Common myeloid progenitor, CD34-positive (primary cell): ENCODE measurements at regions of chr11 and their contacts with region 1.

Region 1: DNA sequence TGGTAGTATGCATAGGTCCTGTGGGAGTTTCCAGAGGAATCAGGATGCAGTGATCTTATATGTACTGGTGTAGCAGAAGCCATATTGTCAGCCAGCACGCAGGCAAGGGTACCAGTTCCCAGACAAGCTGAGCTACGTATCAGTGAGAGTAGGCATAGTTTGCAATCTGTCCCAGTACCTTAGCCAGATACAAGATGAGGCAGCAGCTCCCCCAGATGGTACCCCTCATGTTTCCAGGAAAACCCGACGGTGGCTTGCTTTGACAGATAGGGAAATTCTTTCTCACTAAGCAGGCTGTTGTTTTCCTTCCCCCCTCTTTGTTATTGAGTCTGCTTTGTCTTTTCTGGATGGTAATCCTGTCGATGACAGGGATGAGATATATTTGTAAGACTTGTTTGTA is 109.7 kb upstream of the RRM1 start:
- DNase-seq: peak; percentile 76 to 82 (median 78)
- H3K4me3 ChIP-seq: peak overlapping the region in 1 of 7 experiments; percentile 6
- H3K27ac ChIP-seq: no peak overlapping the region
- H3K4me1 ChIP-seq: peaks cover 0 to 31% (median 24%) of the 10 kb centered on the region in 4 experiments
- H3K27me3 ChIP-seq: no peaks in the 10 kb centered on the region

Region 2: GRCh38 chr11:3929649-3930048 is 55.2 kb before region 1 on chr11:
- CTCF ChIA-PET with region 1: interaction called, 16 read pairs
- POLR2A ChIA-PET with region 1: no interaction called
- DNase-seq: no peak
- H3K4me3 ChIP-seq: no peak overlapping the region
- H3K27ac ChIP-seq: no peak overlapping the region
- H3K4me1 ChIP-seq: peaks cover 6 to 22% (median 10%) of the 10 kb centered on the region in 4 experiments
- H3K27me3 ChIP-seq: no peaks in the 10 kb centered on the region

Region 3: GRCh38 chr11:3939211-3939610 is 45.7 kb before region 1 on chr11:
- CTCF ChIA-PET with region 1: interaction called, 23 read pairs
- POLR2A ChIA-PET with region 1: no interaction called
- DNase-seq: peak in 1 of 3 donors; percentile 24
- H3K4me3 ChIP-seq: no peak overlapping the region
- H3K27ac ChIP-seq: no peak overlapping the region
- H3K4me1 ChIP-seq: peaks cover 13 to 34% (median 27%) of the 10 kb centered on the region in 4 experiments
- H3K27me3 ChIP-seq: no peaks in the 10 kb centered on the region

Region 4: DNA sequence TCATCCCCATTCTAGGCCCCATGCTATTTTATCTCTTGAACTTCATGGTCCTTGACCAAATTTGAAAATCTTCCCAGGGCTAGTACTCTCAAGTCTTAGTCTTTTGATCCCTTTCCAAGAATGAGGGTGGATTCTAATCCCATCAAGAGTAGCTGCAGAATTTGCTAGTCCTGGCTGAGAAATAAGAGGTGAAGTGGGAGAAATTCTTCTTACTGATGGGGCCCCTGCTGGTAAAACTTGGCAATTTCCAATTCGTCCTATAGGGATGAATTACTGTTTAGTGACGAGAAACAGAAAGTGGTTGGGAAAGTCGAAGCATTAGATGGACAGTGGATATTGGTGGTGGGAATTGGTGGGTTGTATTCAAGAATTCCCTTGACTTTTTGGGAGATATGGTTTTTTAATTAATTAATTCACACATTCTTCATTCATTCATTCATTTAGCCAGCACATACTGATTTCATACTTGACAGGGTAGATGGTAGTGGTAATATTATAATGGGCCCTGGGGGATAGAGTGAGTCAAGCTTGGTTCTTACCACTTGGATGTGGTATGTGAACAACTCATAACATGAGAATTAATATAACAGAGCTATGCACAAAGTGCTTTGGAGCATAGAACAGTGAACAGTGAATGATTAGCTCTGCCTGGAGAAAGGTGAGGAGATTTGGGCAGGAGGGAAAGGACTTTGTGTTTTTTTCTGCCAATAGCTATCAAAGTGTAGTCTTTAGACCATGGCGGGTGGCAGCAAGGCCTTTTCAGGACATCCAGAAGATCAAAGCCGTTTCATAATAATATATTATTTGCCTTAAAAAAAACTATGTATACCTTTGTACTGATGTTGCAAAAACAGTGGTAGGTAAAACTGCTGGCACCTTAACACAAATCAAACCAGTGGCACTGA is 25.6 kb before region 1 on chr11:
- CTCF ChIA-PET with region 1: interaction called, 19 read pairs
- POLR2A ChIA-PET with region 1: no interaction called
- DNase-seq: peak in 1 of 3 donors; percentile 43
- H3K4me3 ChIP-seq: no peak overlapping the region
- H3K27ac ChIP-seq: no peak overlapping the region
- H3K4me1 ChIP-seq: peaks cover 0 to 18% (median 5%) of the 10 kb centered on the region in 4 experiments
- H3K27me3 ChIP-seq: no peaks in the 10 kb centered on the region

Region 5: GRCh38 chr11:3971756-3972404 is 13.0 kb before region 1 on chr11:
- CTCF ChIA-PET with region 1: interaction called, 30 read pairs
- POLR2A ChIA-PET with region 1: no interaction called
- DNase-seq: peak; percentile 34 to 70 (median 60)
- H3K4me3 ChIP-seq: no peak overlapping the region
- H3K27ac ChIP-seq: no peak overlapping the region
- H3K4me1 ChIP-seq: peaks cover 2 to 19% (median 10%) of the 10 kb centered on the region in 4 experiments
- H3K27me3 ChIP-seq: no peaks in the 10 kb centered on the region